Panc1 (cell line): ENCODE measurements at regions of chr5 and their contacts with region 1.

Region 1: DNA sequence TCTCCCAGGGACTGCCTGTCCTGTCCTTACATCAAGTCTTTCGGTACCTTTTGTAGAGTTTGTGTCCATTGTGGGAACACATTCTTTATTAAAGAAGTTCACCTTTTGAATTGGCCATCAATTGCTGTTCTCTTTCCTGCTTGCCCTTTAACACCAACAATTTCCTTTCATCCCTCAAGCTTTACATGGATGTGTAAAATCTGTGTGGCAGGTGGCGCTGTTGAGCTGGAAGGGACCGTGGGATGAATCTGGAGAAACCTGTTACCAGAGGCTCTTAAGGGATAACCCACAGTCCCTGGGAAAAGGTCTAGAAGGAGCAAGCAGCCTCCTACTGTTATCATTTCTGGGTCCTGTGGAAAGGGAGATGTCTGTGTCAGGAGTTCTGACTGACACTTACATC is 7.9 kb upstream of the ZFP62 start:
- DNase-seq: peak; percentile 79
- ATAC-seq: peak; percentile 95
- H3K4me3 ChIP-seq: no peak overlapping the region
- H3K27ac ChIP-seq: no peak overlapping the region
- H3K4me1 ChIP-seq: no peaks in the 10 kb centered on the region
- H3K27me3 ChIP-seq: no peaks in the 10 kb centered on the region
- CTCF ChIP-seq: peak; percentile 90

Region 2: DNA sequence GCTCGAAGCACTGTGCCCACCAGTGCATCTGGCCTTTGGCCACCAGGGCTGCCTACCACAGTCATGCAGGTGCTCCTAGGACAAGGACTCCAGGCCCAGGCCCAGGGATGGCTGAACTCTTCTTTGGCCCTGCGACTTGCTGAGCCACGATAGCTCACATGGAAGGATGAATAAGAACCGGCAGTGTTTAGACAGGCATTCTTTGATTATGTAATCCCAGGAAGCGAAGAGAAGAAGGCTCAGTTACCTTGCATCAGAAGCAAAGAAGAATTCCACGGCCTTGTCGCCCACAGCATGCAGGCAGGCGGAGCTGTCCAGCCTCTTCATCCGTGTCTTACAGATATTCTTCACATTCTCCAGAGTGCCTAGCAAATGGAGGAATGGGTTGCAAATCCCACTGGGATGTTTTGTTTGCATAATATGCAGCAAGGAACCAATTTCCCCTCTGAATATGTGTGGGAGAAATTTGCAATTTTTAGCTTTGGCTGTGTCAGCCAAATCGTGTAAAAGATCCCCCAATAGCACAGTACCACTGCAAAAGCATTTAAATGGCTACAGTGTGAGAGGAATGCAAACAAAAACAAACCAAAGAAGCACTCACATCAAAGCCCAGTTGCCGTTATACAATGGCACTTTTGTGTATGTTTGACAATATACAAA is 544.9 kb before region 1 on chr5:
- CTCF ChIA-PET with region 1: no interaction called
- POLR2A ChIA-PET with region 1: no interaction called
- in situ Hi-C with region 1: no loop called
- intact Hi-C with region 1: no loop called
- DNase-seq: no peak
- ATAC-seq: no peak
- H3K4me3 ChIP-seq: no peak overlapping the region
- H3K27ac ChIP-seq: no peak overlapping the region
- H3K4me1 ChIP-seq: no peaks in the 10 kb centered on the region; the same call in 1 of the 2 replicates
- H3K27me3 ChIP-seq: no peaks in the 10 kb centered on the region
- CTCF ChIP-seq: no peak

Region 3: GRCh38 chr5:181043285-181044092 is 174.5 kb after region 1 on chr5:
- CTCF ChIA-PET with region 1: interaction called, 4 read pairs
- POLR2A ChIA-PET with region 1: no interaction called
- in situ Hi-C with region 1: no loop called
- intact Hi-C with region 1: loop called (anchors 5 kb)
- DNase-seq: peak; percentile 15
- ATAC-seq: peak; percentile 80
- H3K4me3 ChIP-seq: no peak overlapping the region
- H3K27ac ChIP-seq: peak overlapping the region; percentile 50; the same call in 1 of the 2 replicates
- H3K4me1 ChIP-seq: peaks cover 23% of the 10 kb centered on the region
- H3K27me3 ChIP-seq: peaks cover 2% of the 10 kb centered on the region; the same call in 1 of the 2 replicates
- CTCF ChIP-seq: peak; percentile 83

Region 4: GRCh38 chr5:181088289-181088688 is 219.3 kb after region 1 on chr5:
- CTCF ChIA-PET with region 1: interaction called, 3 read pairs
- POLR2A ChIA-PET with region 1: no interaction called
- in situ Hi-C with region 1: no loop called
- intact Hi-C with region 1: loop called (anchors 5 kb)
- DNase-seq: no peak
- ATAC-seq: peak; percentile 95
- H3K4me3 ChIP-seq: no peak overlapping the region
- H3K27ac ChIP-seq: no peak overlapping the region
- H3K4me1 ChIP-seq: no peaks in the 10 kb centered on the region
- H3K27me3 ChIP-seq: no peaks in the 10 kb centered on the region
- CTCF ChIP-seq: peak; percentile 85